Caco-2 (cell line): ENCODE measurements at regions of chr5 and their contacts with region 1.

Region 1: GRCh38 chr5:119302916-119303897 is 52.6 kb upstream of the TNFAIP8 start:
- DNase-seq: peak; percentile 68 to 76
- H3K4me3 ChIP-seq: no peak overlapping the region
- H3K4me3 Mint-ChIP-seq: peak overlapping the region; percentile 45
- H3K27ac Mint-ChIP-seq: peak overlapping the region; percentile 85
- H3K4me1 ChIP-seq: peaks cover 31% of the 10 kb centered on the region
- H3K4me1 Mint-ChIP-seq: peaks cover 31% of the 10 kb centered on the region
- H3K27me3 ChIP-seq: no peaks in the 10 kb centered on the region
- H3K27me3 Mint-ChIP-seq: no peaks in the 10 kb centered on the region
- CTCF ChIP-seq: peak; percentile 16 to 21

Region 2: DNA sequence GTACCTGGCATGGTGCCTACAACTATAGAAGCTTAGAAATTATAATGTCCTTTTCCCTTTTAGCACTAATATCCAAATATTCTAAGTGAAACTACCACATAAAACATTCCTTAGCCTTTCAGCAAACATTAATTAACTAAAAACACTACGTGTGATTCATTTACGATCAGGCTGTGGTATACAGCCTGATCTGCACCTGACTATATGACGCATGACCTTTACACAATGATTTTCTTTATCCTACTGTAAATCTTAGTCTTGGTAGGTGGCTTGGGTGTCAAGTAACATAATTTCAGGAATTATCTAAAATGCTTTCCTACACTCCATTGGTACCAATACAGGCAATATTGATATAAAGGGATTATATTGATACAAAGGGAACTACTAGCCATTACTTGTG is 1001.5 kb before region 1 on chr5:
- CTCF ChIA-PET with region 1: no interaction called
- POLR2A ChIA-PET with region 1: no interaction called
- intact Hi-C with region 1: no loop called
- DNase-seq: no peak
- H3K4me3 ChIP-seq: no peak overlapping the region
- H3K4me3 Mint-ChIP-seq: no peak overlapping the region
- H3K27ac Mint-ChIP-seq: no peak overlapping the region
- H3K4me1 ChIP-seq: no peaks in the 10 kb centered on the region
- H3K4me1 Mint-ChIP-seq: no peaks in the 10 kb centered on the region
- H3K27me3 ChIP-seq: no peaks in the 10 kb centered on the region
- H3K27me3 Mint-ChIP-seq: peaks cover 3% of the 10 kb centered on the region
- CTCF ChIP-seq: no peak

Region 3: GRCh38 chr5:119287547-119288073 is 15.6 kb before region 1 on chr5:
- CTCF ChIA-PET with region 1: no interaction called
- POLR2A ChIA-PET with region 1: no interaction called
- intact Hi-C with region 1: loop called (anchors 2 kb)
- DNase-seq: no peak
- H3K4me3 ChIP-seq: no peak overlapping the region
- H3K4me3 Mint-ChIP-seq: peak overlapping the region; percentile 45
- H3K27ac Mint-ChIP-seq: peak overlapping the region; percentile 13
- H3K4me1 ChIP-seq: peaks cover 49% of the 10 kb centered on the region
- H3K4me1 Mint-ChIP-seq: peaks cover 42% of the 10 kb centered on the region
- H3K27me3 ChIP-seq: no peaks in the 10 kb centered on the region
- H3K27me3 Mint-ChIP-seq: no peaks in the 10 kb centered on the region
- CTCF ChIP-seq: no peak

Region 4: DNA sequence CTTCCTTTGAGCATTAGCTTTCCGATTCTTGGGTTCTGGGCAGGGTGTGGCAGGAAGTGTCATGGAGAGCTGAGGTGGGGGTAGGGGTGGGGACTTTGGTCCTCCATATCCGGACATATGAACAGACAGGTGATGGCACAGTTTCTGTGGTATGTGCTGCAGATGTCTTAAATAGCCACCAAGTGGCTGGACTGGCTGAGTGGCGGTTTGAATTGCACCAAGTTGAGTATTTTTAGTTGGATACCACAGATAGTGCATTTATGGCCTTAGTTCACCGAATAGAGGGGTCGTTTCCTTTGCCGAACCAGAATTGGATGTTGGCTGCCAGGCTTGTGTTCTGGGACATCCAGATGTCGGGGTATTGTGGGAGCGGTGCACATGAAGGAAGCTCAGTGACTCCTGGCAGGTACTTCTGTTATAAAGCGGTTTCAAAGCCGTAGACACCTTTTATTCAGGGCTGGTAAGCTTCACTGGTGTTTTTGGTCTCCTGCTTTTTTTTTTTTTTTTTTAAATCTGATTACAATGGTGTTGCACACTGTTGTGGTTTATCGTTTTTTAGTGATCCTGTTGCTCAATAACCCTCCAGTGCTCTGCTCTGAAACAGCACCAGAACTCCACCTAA is 37.5 kb after region 1 on chr5:
- CTCF ChIA-PET with region 1: no interaction called
- POLR2A ChIA-PET with region 1: no interaction called
- intact Hi-C with region 1: no loop called
- DNase-seq: no peak
- H3K4me3 ChIP-seq: no peak overlapping the region
- H3K4me3 Mint-ChIP-seq: no peak overlapping the region
- H3K27ac Mint-ChIP-seq: no peak overlapping the region
- H3K4me1 ChIP-seq: peaks cover 7% of the 10 kb centered on the region
- H3K4me1 Mint-ChIP-seq: peaks cover 8% of the 10 kb centered on the region
- H3K27me3 ChIP-seq: no peaks in the 10 kb centered on the region
- H3K27me3 Mint-ChIP-seq: no peaks in the 10 kb centered on the region
- CTCF ChIP-seq: no peak